Gastrocnemius medialis (tissue), 4 donors: ENCODE measurements at regions of chr14 and their contacts with region 1.

Region 1: GRCh38 chr14:81464247-81465002 is 64.3 kb upstream of the STON2 start:
- DNase-seq: no peak
- ATAC-seq: peak; percentile 60 to 68
- H3K4me3 ChIP-seq: peak overlapping the region; percentile 41 to 62 (median 45)
- H3K27ac ChIP-seq: peak overlapping the region; percentile 17 to 39 (median 24)
- H3K4me1 ChIP-seq: peaks cover 3 to 7% of the 10 kb centered on the region in 2 donors
- H3K27me3 ChIP-seq: no peaks in the 10 kb centered on the region
- CTCF ChIP-seq: peak; percentile 80 to 96 (median 86)
- POLR2A ChIP-seq: no peak

Region 2: DNA sequence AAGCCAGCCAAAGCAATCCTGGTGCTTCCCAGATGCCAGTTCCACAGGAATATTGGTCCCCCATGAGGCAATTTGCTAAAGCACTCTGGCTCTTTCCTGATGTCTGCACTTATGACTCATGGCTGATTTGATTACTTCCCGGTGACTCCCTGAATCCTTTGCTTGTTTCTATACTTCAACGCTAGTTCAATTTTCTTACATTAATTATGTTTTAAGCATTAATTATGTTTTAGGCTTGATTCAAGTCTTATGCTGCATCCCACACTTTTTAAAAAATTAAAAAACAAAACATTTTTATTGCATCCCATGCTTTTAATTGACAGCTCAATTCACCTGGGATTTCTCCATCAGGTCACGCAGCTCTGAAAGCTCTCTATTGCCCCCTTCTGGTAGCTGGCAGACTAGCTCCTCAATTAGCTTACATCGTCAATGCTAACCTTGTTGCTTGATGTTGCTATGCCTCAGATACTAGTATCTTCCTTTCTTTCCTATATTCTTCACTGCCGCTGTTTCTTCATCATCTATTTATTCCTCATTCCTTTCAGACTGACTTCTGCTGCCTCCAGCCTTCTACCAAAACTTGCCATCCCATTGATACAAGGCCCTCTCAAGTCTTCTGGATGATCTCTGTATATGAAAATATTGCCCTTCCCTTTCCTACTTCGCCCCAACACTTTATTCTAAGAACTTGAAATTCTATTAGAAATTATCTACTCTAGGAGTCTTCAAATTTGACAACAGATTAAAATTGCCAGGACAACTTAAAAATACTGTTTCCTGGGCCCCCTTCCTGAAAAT is 477.0 kb before region 1 on chr14:
- in situ Hi-C with region 1: loop called (anchors 25 kb)
- intact Hi-C with region 1: no loop called
- DNase-seq: peak; percentile 36 to 42
- ATAC-seq: peak; percentile 83 to 91
- H3K4me3 ChIP-seq: no peak overlapping the region
- H3K27ac ChIP-seq: no peak overlapping the region
- H3K4me1 ChIP-seq: no peaks in the 10 kb centered on the region
- H3K27me3 ChIP-seq: no peaks in the 10 kb centered on the region
- CTCF ChIP-seq: peak; percentile 82 to 91 (median 88)
- POLR2A ChIP-seq: no peak

Region 3: DNA sequence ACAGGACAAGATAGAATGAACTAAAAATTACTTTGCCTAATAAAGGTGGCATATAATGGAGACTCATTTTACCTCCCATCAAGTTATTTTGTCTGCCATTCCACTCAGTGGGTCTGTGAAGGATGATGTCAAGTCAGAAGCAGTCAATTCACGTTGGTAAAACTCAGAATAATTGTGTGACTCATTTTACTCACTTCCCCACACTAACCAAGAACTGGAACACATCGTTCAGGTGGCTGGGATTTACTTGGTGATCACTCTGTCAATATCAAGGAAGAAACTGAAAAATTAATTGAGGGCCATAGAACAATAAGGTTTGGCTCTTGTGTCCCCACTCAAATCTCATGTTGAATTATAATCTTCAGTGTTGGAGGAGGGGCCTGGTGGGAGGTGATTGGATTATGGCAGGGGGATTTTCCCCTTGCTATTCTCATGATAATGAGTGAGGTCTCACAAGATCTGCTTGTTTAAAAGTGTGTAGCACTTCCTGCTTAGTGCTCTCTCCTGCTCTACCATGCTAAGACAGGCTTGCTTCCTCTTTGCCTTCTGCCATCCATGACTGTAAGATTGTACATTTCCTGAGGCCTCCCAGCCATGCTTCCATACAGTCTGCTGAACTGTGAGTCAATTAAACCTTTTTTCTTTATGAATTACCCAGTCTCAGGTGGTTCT is 208.0 kb before region 1 on chr14:
- in situ Hi-C with region 1: no loop called
- intact Hi-C with region 1: no loop called
- DNase-seq: no peak
- ATAC-seq: no peak
- H3K4me3 ChIP-seq: no peak overlapping the region
- H3K27ac ChIP-seq: no peak overlapping the region
- H3K4me1 ChIP-seq: no peaks in the 10 kb centered on the region
- H3K27me3 ChIP-seq: no peaks in the 10 kb centered on the region
- CTCF ChIP-seq: no peak
- POLR2A ChIP-seq: no peak

Region 4: GRCh38 chr14:81269100-81269978 is 195.1 kb before region 1 on chr14:
- in situ Hi-C with region 1: no loop called
- intact Hi-C with region 1: loop called (anchors 1 kb)
- DNase-seq: no peak
- ATAC-seq: peak; percentile 90 to 91
- H3K4me3 ChIP-seq: no peak overlapping the region
- H3K27ac ChIP-seq: peak overlapping the region; percentile 49 to 67 (median 60)
- H3K4me1 ChIP-seq: peaks cover 16 to 31% of the 10 kb centered on the region in 2 donors
- H3K27me3 ChIP-seq: no peaks in the 10 kb centered on the region
- CTCF ChIP-seq: peak; percentile 77 to 92 (median 83)
- POLR2A ChIP-seq: no peak